Heart left ventricle (tissue), 16 donors: ENCODE measurements at regions of chr20 and their contacts with region 1.

Region 1: GRCh38 chr20:53578492-53579222 is 15.0 kb downstream of the ZNF217 start:
- DNase-seq: peak in 2 of 5 donors; percentile 68 to 76
- ATAC-seq: peak in 3 of 4 donors; percentile 71 to 81 (median 80)
- H3K4me3 ChIP-seq: peak overlapping the region in 5 of 12 donors; percentile 6 to 52 (median 17)
- H3K27ac ChIP-seq: peak overlapping the region in 10 of 12 donors; percentile 10 to 91 (median 52)
- H3K4me1 ChIP-seq: peaks cover 0 to 68% (median 34%) of the 10 kb centered on the region in 12 donors
- H3K27me3 ChIP-seq: no peaks in the 10 kb centered on the region
- CTCF ChIP-seq: peak; percentile 74 to 94 (median 90)
- POLR2A ChIP-seq: no peak

Region 2: GRCh38 chr20:53750827-53751619 is 172.4 kb after region 1 on chr20:
- intact Hi-C with region 1: loop called in 1 of 10 experiments (anchors 5 kb)
- DNase-seq: no peak
- ATAC-seq: peak in 3 of 4 donors; percentile 37 to 60 (median 38)
- H3K4me3 ChIP-seq: no peak overlapping the region
- H3K27ac ChIP-seq: peak overlapping the region in 10 of 12 donors; percentile 3 to 71 (median 32)
- H3K4me1 ChIP-seq: peaks cover 0 to 29% (median 7%) of the 10 kb centered on the region in 12 donors
- H3K27me3 ChIP-seq: no peaks in the 10 kb centered on the region
- CTCF ChIP-seq: no peak
- POLR2A ChIP-seq: no peak

Region 3: DNA sequence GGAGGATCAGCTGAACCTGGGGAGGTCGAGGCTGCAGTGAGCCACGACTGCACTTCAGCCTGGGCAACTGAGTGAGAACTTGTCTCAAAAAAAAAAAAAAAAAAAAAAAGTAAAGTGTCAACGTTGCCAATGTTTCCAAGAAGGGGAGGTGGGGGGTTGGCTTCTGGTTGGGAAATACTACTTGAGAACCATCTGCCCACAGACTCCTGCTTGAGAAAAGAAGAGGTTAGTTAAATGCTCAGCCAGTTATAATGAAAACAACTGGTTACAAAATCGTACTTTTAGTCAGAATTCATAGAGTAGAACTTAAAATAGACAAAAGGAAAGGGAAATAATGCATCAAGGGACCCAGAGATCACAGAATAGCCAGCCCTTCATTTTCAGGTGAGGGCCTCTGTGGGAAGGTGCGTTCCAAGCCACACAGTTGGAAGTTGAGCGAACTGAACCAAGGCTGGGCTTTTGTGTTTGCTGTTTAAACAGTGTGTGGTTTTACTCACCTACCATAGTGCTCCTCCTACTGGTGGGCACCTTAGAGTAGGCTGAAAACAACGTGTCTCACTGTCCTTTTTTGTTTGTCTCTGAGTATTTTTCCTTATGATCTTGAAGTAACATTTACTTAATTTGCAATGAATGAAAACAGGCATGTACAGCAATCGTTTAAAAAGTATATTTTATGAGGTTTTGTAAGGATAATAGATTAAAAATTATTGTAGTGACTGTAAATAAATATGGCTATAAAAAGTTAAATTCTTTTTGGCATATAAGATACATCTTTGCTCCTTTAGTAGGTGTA is 291.0 kb after region 1 on chr20:
- intact Hi-C with region 1: loop called in 8 of 10 experiments (anchors 1 to 5 kb)
- DNase-seq: peak in 4 of 5 donors; percentile 54 to 67 (median 61)
- ATAC-seq: peak; percentile 72 to 94 (median 87)
- H3K4me3 ChIP-seq: peak overlapping the region in 1 of 12 donors; percentile 13
- H3K27ac ChIP-seq: peak overlapping the region in 4 of 12 donors; percentile 20 to 65 (median 52)
- H3K4me1 ChIP-seq: peaks cover 0 to 62% (median 22%) of the 10 kb centered on the region in 12 donors
- H3K27me3 ChIP-seq: no peaks in the 10 kb centered on the region
- CTCF ChIP-seq: peak; percentile 60 to 86 (median 76)
- POLR2A ChIP-seq: no peak

Region 4: DNA sequence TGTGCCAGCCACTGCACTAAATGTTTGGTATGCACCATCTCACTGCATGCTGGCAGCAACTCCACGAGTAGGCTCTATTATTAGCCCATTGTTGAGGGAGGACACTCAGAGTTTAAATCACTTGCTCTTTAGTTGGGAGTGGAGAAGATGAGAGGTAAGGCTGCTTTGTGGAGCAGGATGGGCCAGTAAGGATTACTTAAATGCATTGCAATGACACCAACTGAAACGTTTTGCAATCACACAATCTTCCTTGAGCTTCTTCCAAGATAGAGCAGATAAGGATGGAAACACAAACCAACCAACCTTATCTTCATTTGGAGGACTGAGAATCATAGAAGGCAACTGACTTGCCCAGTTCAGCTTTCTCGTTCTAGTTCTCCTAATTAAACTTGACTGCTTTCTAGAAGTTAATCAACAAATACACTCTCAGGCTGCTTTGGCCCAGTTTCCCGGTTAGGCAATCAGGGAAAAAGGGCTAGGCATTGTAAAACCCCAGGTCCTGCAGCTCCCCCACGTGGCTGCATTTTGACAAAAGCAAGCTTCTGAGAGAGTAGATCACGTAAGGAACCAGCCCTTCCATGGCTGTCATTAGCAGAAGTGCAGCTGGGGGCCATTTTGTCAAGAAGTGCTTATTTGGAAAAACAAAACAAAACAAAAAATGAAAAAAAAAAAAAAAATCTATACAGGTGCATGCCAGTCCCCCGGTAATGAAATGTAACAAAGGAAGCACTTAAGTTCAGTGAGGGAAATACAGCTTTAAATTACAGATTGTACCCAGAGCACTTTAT is 361.1 kb after region 1 on chr20:
- intact Hi-C with region 1: loop called (anchors 1 to 5 kb)
- DNase-seq: peak; percentile 91 to 97 (median 92)
- ATAC-seq: peak; percentile 90 to 95 (median 93)
- H3K4me3 ChIP-seq: peak overlapping the region in 6 of 12 donors; percentile 13 to 31 (median 20)
- H3K27ac ChIP-seq: peak overlapping the region in 11 of 12 donors; percentile 68 to 91 (median 77)
- H3K4me1 ChIP-seq: peaks cover 0 to 76% (median 36%) of the 10 kb centered on the region in 12 donors
- H3K27me3 ChIP-seq: no peaks in the 10 kb centered on the region
- CTCF ChIP-seq: peak; percentile 62 to 86 (median 82)
- POLR2A ChIP-seq: no peak

Region 5: GRCh38 chr20:54207743-54208547 is 629.3 kb after region 1 on chr20 and contains the start of gene PFDN4:
- intact Hi-C with region 1: loop called in 2 of 10 experiments (anchors 10 kb)
- DNase-seq: peak; percentile 82 to 88 (median 85)
- ATAC-seq: peak; percentile 92 to 99 (median 98)
- H3K4me3 ChIP-seq: peak within 1 kb of the TSS; percentile 68 to 99 (median 93)
- H3K27ac ChIP-seq: peak within 1 kb of the TSS; percentile 94 to 100 (median 98)
- H3K4me1 ChIP-seq: peaks cover 0 to 30% (median 18%) of the 10 kb centered on the region in 12 donors
- H3K27me3 ChIP-seq: no peaks in the 10 kb centered on the region
- CTCF ChIP-seq: peak; percentile 74 to 97 (median 88)
- POLR2A ChIP-seq: peak in 1 of 2 donors; percentile 31
- total RNA-seq, gene PFDN4: 21.0 to 92.0 (median 28.4) TPM